ENCODE measurements at regions of chr3 and their contacts with region 1.

Region 1: DNA sequence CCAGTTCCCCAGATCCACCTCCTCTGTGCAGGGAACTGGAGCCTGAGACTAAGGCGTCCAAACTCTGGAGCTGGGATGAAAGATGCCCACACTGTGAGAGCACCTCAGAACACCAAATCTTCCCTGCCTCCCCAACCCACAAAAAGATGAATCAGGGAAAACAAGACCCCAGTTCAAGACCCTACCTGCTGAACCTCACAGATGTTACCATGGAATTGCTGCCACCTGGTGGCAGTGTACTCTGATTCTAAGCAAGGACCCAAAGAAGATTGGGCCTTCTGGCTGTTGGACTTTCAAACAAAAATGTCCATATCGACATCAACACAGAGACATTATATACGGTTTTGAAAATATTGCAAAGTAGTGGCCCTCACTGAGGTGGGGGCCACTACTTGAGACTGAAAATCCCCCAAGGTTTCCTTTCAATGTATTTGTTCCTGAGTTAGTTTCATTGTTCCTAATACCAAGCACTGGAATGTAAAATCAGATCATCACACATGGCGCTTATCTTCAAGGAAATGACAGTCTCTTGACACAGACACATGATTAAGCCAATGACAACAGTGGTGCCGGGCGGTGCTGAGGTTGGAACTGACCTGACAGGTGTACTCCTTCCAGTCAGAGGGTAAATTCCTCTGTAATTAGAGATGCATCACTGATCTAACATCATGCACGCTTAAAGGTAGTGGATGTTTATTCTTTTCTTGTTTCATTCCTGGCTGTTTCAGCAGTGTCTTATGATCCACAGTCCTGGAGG is 67.6 kb downstream of the SLC6A11 start:
- H3K4me3 Mint-ChIP-seq: no peak overlapping the region
- H3K27ac Mint-ChIP-seq: no peak overlapping the region
- H3K4me1 Mint-ChIP-seq: peaks cover 10% of the 10 kb centered on the region
- H3K27me3 Mint-ChIP-seq: peaks cover 14% of the 10 kb centered on the region

Region 2: DNA sequence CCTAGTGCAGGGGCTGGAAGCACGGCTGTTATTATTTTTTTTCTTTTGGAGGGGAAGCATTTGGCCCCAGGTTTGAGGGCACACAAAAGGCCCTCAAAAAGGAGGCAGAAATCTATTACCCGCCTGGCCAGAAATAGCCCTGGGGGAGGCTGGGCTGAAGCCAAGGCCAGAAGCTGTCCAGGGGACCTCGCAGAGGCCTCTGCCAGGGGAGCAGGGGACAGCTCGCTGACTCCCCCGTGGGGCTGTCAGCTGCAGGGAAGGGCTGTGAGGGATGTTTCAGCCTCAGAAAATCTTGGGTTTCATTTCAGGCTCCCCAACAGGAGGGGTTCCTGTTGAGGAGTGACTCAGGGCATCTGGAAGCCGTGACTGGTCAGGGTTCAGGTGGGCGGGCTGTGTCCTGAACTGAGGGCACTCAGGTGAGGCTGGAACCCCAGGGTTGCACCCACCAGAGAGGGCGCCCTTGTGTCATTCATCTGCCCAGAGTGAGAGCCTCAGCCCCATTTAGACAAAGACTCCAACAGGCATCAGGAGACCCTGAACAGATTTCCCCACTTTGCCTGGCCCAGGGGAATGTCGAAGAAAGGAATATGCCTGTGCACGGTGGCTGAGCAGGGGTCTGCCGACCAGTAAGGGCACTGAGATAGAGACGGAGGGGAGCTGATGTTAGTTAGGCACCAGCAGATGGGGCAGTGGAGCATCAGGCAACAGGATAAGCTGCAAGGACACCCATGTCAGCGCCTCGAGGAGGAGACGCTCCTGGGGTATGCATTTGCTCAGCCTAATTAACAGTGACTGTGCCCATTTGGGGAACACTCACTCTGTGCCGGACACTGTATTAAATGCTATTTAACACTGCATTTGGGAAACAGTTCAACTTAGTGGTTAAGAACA is 111.1 kb before region 1 on chr3:
- intact Hi-C with region 1: loop called (anchors 5 kb)
- H3K4me3 Mint-ChIP-seq: no peak overlapping the region
- H3K27ac Mint-ChIP-seq: no peak overlapping the region
- H3K4me1 Mint-ChIP-seq: no peaks in the 10 kb centered on the region
- H3K27me3 Mint-ChIP-seq: peaks cover 26% of the 10 kb centered on the region

Region 3: GRCh38 chr3:10835406-10835805 is 48.2 kb before region 1 on chr3:
- intact Hi-C with region 1: loop called (anchors 1 kb)
- H3K4me3 Mint-ChIP-seq: no peak overlapping the region
- H3K27ac Mint-ChIP-seq: no peak overlapping the region
- H3K4me1 Mint-ChIP-seq: peaks cover 12% of the 10 kb centered on the region
- H3K27me3 Mint-ChIP-seq: peaks cover 17% of the 10 kb centered on the region

Measured in dendritic cell treated with granulocyte-macrophage colony-stimulating factor and Interleukin-4, amounts not matched to agents 40 ng/mL and 50 ng/mL, for 4 days (primary cell).